ENCODE measurements at regions of chr1 and their contacts with region 1.

Region 1: GRCh38 chr1:40344597-40344996 is 27.5 kb upstream of the COL9A2 start:
- DNase-seq: peak; percentile 82 to 87 (median 86)
- H3K4me3 ChIP-seq: peak overlapping the region; percentile 56 to 88 (median 84)
- H3K4me3 Mint-ChIP-seq: peak overlapping the region; percentile 78 to 96
- H3K27ac ChIP-seq: peak overlapping the region; percentile 84 to 93
- H3K27ac Mint-ChIP-seq: peak overlapping the region; percentile 88 to 98 (median 96)
- H3K4me1 ChIP-seq: peaks cover 66 to 77% of the 10 kb centered on the region in 2 donors
- H3K4me1 Mint-ChIP-seq: peaks cover 76% of the 10 kb centered on the region
- H3K27me3 ChIP-seq: no peaks in the 10 kb centered on the region
- H3K27me3 Mint-ChIP-seq: peaks cover 0 to 13% (median 1%) of the 10 kb centered on the region in 3 donors
- CTCF ChIP-seq: no peak

Region 2: GRCh38 chr1:40096977-40097782 is 247.4 kb before region 1 on chr1 and contains the start of gene PPT1:
- intact Hi-C with region 1: loop called in 1 of 2 experiments (anchors 5 kb)
- DNase-seq: peak; percentile 52 to 73 (median 69)
- H3K4me3 ChIP-seq: peak within 1 kb of the TSS; percentile 75 to 88 (median 79)
- H3K4me3 Mint-ChIP-seq: peak within 1 kb of the TSS; percentile 94 to 96
- H3K27ac ChIP-seq: peak within 1 kb of the TSS; percentile 80 to 89
- H3K27ac Mint-ChIP-seq: peak within 1 kb of the TSS; percentile 90 to 94 (median 93)
- H3K4me1 ChIP-seq: peaks cover 56% of the 10 kb centered on the region in 2 donors
- H3K4me1 Mint-ChIP-seq: peaks cover 54% of the 10 kb centered on the region
- H3K27me3 ChIP-seq: no peaks in the 10 kb centered on the region
- H3K27me3 Mint-ChIP-seq: peaks cover 0 to 7% (median 5%) of the 10 kb centered on the region in 3 donors
- CTCF ChIP-seq: peak; percentile 31
- polyA plus RNA-seq, gene PPT1: 166 to 1,143 (median 658) TPM

Region 3: GRCh38 chr1:40385437-40386358 is 41.1 kb after region 1 on chr1:
- intact Hi-C with region 1: loop called in 1 of 2 experiments (anchors 5 kb)
- DNase-seq: peak; percentile 80 to 93 (median 91)
- H3K4me3 ChIP-seq: peak overlapping the region in 2 of 3 experiments; percentile 31 to 69
- H3K4me3 Mint-ChIP-seq: peak overlapping the region; percentile 60 to 85
- H3K27ac ChIP-seq: peak overlapping the region; percentile 93 to 98
- H3K27ac Mint-ChIP-seq: peak overlapping the region; percentile 95 to 99 (median 98)
- H3K4me1 ChIP-seq: peaks cover 98 to 99% of the 10 kb centered on the region in 2 donors
- H3K4me1 Mint-ChIP-seq: peaks cover 94% of the 10 kb centered on the region
- H3K27me3 ChIP-seq: no peaks in the 10 kb centered on the region
- H3K27me3 Mint-ChIP-seq: peaks cover 0 to 2% (median 0%) of the 10 kb centered on the region in 3 donors
- CTCF ChIP-seq: no peak